ENCODE measurements at regions of chr14 and their contacts with region 1.

Region 1: DNA sequence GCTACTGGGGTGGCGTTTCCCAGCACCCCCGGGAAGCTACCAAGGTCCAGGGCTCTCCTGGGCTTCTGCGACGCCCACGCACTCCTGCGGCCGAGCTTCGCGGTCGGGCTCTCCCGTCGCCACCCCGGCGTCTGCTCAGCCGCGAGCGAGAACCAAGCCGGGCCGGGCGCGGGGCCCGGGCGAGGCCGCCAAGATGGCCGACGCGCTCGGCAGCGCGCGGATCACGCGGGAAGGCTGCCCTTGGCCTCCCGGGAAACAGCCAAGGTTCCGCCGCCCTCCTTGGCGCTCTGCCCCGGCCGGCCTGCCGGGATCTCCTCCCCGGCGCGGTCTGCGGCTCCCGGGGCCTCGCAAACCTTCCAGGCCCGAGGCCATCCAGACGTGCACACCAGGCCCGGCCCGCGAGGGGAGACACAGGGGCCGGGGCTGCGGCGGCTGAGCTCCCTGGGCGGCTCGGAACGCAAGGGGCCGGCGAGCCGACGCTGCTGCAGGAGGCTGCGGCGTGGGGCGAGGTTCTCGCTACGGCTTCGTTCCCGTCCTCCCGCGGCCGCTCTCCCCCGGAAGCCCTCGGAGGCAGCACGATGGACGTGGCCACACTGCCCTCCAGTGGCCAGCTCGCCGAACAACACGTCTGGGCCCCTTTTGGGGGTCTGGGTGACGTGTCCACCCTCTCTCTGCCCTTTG is 23.5 kb upstream of the ZFP36L1 start:
- DNase-seq: peak; percentile 94
- ATAC-seq: peak; percentile 61
- H3K4me3 Mint-ChIP-seq: peak overlapping the region; percentile 38
- H3K27ac Mint-ChIP-seq: no peak overlapping the region
- H3K4me1 Mint-ChIP-seq: peaks cover 75% of the 10 kb centered on the region
- H3K27me3 Mint-ChIP-seq: peaks cover 2% of the 10 kb centered on the region; the same call in 1 of the 2 replicates
- CTCF ChIP-seq: peak; percentile 88

Region 2: DNA sequence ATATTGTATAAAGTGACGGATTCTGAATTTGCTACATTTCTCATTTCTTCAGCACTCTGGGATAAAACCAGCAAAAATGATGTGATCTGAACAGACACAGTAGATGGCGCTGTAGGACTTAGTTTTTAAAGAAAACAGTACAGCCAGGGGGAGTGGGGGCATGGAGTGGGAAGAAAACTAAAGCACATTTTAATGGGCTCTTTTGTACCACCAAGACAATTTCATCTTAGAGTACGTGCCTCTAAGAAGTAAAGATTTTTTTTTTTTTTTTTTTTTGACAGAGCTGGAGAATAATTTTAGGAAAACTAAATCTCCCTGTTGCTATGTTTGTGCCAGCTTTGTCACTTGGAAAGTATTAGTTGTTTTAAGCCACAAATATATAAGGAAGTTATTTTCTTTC is 872.5 kb before region 1 on chr14:
- CTCF ChIA-PET with region 1: interaction called, 11 read pairs
- POLR2A ChIA-PET with region 1: interaction called, 3 read pairs
- DNase-seq: peak; percentile 61
- ATAC-seq: peak; percentile 63; the same call in 1 of the 2 replicates
- H3K4me3 Mint-ChIP-seq: no peak overlapping the region
- H3K27ac Mint-ChIP-seq: no peak overlapping the region
- H3K4me1 Mint-ChIP-seq: peaks cover 50% of the 10 kb centered on the region
- H3K27me3 Mint-ChIP-seq: no peaks in the 10 kb centered on the region
- CTCF ChIP-seq: peak; percentile 60

Region 3: GRCh38 chr14:68718023-68718995 is 98.1 kb before region 1 on chr14:
- CTCF ChIA-PET with region 1: interaction called, 12 read pairs
- POLR2A ChIA-PET with region 1: no interaction called
- DNase-seq: no peak
- ATAC-seq: peak; percentile 81
- H3K4me3 Mint-ChIP-seq: no peak overlapping the region
- H3K27ac Mint-ChIP-seq: no peak overlapping the region
- H3K4me1 Mint-ChIP-seq: peaks cover 4% of the 10 kb centered on the region; the same call in 1 of the 2 replicates
- H3K27me3 Mint-ChIP-seq: peaks cover 4% of the 10 kb centered on the region; the same call in 1 of the 2 replicates
- CTCF ChIP-seq: no peak

Region 4: GRCh38 chr14:68795597-68796417 is 20.6 kb before region 1 on chr14:
- CTCF ChIA-PET with region 1: interaction called, 37 read pairs
- POLR2A ChIA-PET with region 1: interaction called, 67 read pairs
- DNase-seq: peak; percentile 88
- ATAC-seq: peak; percentile 54
- H3K4me3 Mint-ChIP-seq: peak overlapping the region; percentile 98
- H3K27ac Mint-ChIP-seq: peak overlapping the region; percentile 96
- H3K4me1 Mint-ChIP-seq: peaks cover 43% of the 10 kb centered on the region
- H3K27me3 Mint-ChIP-seq: no peaks in the 10 kb centered on the region; the same call in 1 of the 2 replicates
- CTCF ChIP-seq: peak; percentile 55

Region 5: DNA sequence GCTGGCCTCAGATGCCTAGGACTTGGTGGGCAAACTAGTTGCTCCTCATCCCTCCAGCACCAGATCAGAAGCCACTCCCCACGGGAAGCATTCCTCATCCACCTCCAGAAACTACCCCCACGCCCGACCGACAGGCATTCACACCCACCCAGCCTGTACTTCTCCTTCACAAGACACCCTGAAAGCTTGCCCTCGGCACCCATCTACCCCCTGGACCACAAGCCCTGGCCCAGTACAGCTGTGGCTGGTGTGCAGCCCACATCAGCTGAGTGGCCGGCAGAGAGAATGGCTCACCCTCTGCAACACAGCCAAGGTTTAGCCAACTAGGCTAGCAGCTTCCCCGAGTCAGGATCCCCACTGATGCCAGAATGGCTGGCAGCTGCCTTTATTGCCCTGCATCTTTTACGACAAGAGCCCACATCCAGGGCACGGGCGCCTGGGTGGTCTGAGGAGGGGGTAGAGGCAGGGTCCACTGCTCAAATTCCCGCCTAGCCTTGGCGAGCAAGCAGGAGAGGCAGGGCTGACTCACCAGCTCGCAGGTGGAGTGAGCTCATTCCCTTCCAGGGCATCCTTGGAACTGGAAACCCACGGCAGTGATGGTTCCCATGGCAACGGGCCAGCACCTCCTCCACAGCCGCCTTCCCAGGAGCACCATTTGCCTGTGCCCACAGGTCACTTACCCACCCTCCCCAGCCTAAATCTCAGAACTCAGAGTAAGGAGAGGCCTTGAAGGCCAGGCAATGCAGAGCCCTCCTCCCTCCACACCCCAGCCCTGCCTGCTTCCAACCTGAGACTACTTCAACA is 145.6 kb after region 1 on chr14:
- CTCF ChIA-PET with region 1: no interaction called
- POLR2A ChIA-PET with region 1: no interaction called
- DNase-seq: peak; percentile 63
- ATAC-seq: peak; percentile 68
- H3K4me3 Mint-ChIP-seq: no peak overlapping the region
- H3K27ac Mint-ChIP-seq: peak overlapping the region; percentile 51; the same call in 1 of the 2 replicates
- H3K4me1 Mint-ChIP-seq: peaks cover 73% of the 10 kb centered on the region
- H3K27me3 Mint-ChIP-seq: no peaks in the 10 kb centered on the region
- CTCF ChIP-seq: no peak

Region 6: DNA sequence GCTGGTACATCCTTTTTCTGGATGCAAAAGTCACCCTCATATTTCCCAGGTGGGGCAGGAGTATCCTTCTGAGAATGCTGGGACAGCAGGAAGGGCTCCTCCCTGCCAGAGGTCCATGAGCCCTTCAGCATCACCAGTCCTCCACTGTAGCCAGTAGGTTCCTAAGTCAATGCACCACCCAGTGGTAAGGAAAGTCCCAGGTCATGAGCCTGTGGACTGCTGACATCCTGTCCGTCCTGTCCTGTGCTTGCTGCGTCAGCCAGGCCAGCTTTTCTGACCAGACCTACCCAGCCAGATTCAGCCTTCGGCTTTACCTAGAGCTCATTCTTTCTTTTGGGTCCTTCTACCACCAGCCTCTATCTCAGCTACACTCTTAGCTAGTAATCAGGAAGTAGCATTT is 185.7 kb after region 1 on chr14:
- CTCF ChIA-PET with region 1: no interaction called
- POLR2A ChIA-PET with region 1: no interaction called
- DNase-seq: peak; percentile 27
- ATAC-seq: peak; percentile 70
- H3K4me3 Mint-ChIP-seq: no peak overlapping the region
- H3K27ac Mint-ChIP-seq: no peak overlapping the region
- H3K4me1 Mint-ChIP-seq: peaks cover 33% of the 10 kb centered on the region
- H3K27me3 Mint-ChIP-seq: peaks cover 3% of the 10 kb centered on the region
- CTCF ChIP-seq: no peak

Measured in WTC11 (cell line).